ENCODE measurements at regions of chr21 and their contacts with region 1.

Region 1: DNA sequence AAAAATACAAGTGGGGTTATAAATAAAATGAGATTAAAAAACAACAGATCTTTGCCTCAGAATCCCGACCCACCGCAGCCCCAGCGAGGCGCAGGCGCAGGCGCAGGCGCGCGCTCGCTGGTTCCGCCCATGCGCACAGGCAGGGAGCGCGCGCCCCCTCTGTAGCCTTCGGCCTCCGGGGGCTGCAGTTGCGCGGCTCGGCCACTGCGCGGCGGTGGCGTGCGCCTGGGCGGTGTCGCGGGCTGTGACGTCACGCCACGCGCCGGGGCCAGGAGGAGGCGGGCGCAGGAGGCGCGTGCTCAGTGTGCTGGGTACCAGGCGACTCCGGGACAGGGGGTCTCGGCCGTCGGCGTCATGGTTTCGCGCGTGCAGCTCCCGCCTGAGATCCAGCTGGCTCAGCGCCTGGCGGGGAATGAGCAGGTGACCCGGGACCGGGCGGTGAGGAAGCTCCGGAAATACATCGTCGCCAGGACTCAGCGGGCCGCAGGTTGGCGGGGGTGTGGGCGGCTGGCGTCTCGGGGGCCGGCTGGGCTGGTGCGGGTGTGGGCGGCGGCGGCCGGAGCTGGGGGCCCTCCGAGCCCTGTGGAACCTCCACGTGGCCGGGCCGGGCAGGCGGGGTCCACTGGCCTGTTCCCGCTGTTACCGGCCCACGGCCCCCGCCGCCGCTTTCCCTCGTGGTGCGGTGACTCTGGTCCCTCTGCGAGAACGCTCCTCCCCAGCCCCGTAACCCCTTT is at the start of gene RRP1:
- DNase-seq: peak; percentile 99
- CTCF ChIP-seq: peak; percentile 99

Region 2: GRCh38 chr21:43771698-43772424 is 17.6 kb before region 1 on chr21:
- CTCF ChIA-PET with region 1: interaction called, 16 read pairs
- POLR2A ChIA-PET with region 1: no interaction called
- DNase-seq: no peak
- CTCF ChIP-seq: no peak

Region 3: GRCh38 chr21:43778469-43779335 is 10.7 kb before region 1 on chr21:
- CTCF ChIA-PET with region 1: interaction called, 21 read pairs
- POLR2A ChIA-PET with region 1: no interaction called
- DNase-seq: no peak
- CTCF ChIP-seq: no peak

Region 4: GRCh38 chr21:43805275-43805800 is 15.9 kb after region 1 on chr21:
- CTCF ChIA-PET with region 1: interaction called, 10 read pairs
- POLR2A ChIA-PET with region 1: no interaction called
- DNase-seq: peak; percentile 95
- CTCF ChIP-seq: no peak

Region 5: GRCh38 chr21:43810505-43811261 is 21.2 kb after region 1 on chr21:
- CTCF ChIA-PET with region 1: interaction called, 10 read pairs
- POLR2A ChIA-PET with region 1: no interaction called
- DNase-seq: peak; percentile 95
- CTCF ChIP-seq: peak; percentile 98

Measured in GM10248 (cell line).